ENCODE measurements at regions of chr5 and their contacts with region 1.

Region 1: GRCh38 chr5:65952259-65952658 is 25.9 kb downstream of the ERBIN start:
- DNase-seq: no peak
- ATAC-seq: no peak
- H3K4me3 ChIP-seq: no peak overlapping the region
- H3K4me3 Mint-ChIP-seq: no peak overlapping the region
- H3K27ac ChIP-seq: no peak overlapping the region
- H3K27ac Mint-ChIP-seq: no peak overlapping the region
- H3K4me1 ChIP-seq: peaks cover 23% of the 10 kb centered on the region
- H3K4me1 Mint-ChIP-seq: peaks cover 76% of the 10 kb centered on the region
- H3K27me3 ChIP-seq: no peaks in the 10 kb centered on the region
- H3K27me3 Mint-ChIP-seq: no peaks in the 10 kb centered on the region
- CTCF ChIP-seq: no peak

Region 2: GRCh38 chr5:65938256-65938655 is 14.0 kb before region 1 on chr5:
- CTCF ChIA-PET with region 1: interaction called, 4 read pairs
- POLR2A ChIA-PET with region 1: interaction called, 3 read pairs
- intact Hi-C with region 1: loop called in 1 of 2 experiments (anchors 2 kb)
- DNase-seq: no peak
- ATAC-seq: no peak
- H3K4me3 ChIP-seq: no peak overlapping the region
- H3K4me3 Mint-ChIP-seq: no peak overlapping the region
- H3K27ac ChIP-seq: no peak overlapping the region
- H3K27ac Mint-ChIP-seq: peak overlapping the region; percentile 49
- H3K4me1 ChIP-seq: peaks cover 32% of the 10 kb centered on the region
- H3K4me1 Mint-ChIP-seq: peaks cover 58% of the 10 kb centered on the region
- H3K27me3 ChIP-seq: no peaks in the 10 kb centered on the region
- H3K27me3 Mint-ChIP-seq: no peaks in the 10 kb centered on the region
- CTCF ChIP-seq: no peak

Region 3: GRCh38 chr5:65967288-65968066 is 15.2 kb after region 1 on chr5:
- CTCF ChIA-PET with region 1: no interaction called
- POLR2A ChIA-PET with region 1: no interaction called
- intact Hi-C with region 1: no loop called
- DNase-seq: no peak
- ATAC-seq: peak; percentile 39
- H3K4me3 ChIP-seq: no peak overlapping the region
- H3K4me3 Mint-ChIP-seq: no peak overlapping the region
- H3K27ac ChIP-seq: no peak overlapping the region
- H3K27ac Mint-ChIP-seq: peak overlapping the region; percentile 64
- H3K4me1 ChIP-seq: peaks cover 42% of the 10 kb centered on the region
- H3K4me1 Mint-ChIP-seq: peaks cover 74% of the 10 kb centered on the region
- H3K27me3 ChIP-seq: no peaks in the 10 kb centered on the region
- H3K27me3 Mint-ChIP-seq: no peaks in the 10 kb centered on the region
- CTCF ChIP-seq: no peak

Region 4: GRCh38 chr5:65986050-65986451 is 33.8 kb after region 1 on chr5:
- CTCF ChIA-PET with region 1: no interaction called
- POLR2A ChIA-PET with region 1: no interaction called
- intact Hi-C with region 1: loop called in 1 of 2 experiments (anchors 5 kb)
- DNase-seq: no peak
- ATAC-seq: no peak
- H3K4me3 ChIP-seq: no peak overlapping the region
- H3K4me3 Mint-ChIP-seq: no peak overlapping the region
- H3K27ac ChIP-seq: no peak overlapping the region
- H3K27ac Mint-ChIP-seq: peak overlapping the region; percentile 62
- H3K4me1 ChIP-seq: peaks cover 21% of the 10 kb centered on the region
- H3K4me1 Mint-ChIP-seq: peaks cover 65% of the 10 kb centered on the region
- H3K27me3 ChIP-seq: no peaks in the 10 kb centered on the region
- H3K27me3 Mint-ChIP-seq: no peaks in the 10 kb centered on the region
- CTCF ChIP-seq: no peak